Aorta (tissue), 5 donors: ENCODE measurements at regions of chr17 and their contacts with region 1.

Region 1: DNA sequence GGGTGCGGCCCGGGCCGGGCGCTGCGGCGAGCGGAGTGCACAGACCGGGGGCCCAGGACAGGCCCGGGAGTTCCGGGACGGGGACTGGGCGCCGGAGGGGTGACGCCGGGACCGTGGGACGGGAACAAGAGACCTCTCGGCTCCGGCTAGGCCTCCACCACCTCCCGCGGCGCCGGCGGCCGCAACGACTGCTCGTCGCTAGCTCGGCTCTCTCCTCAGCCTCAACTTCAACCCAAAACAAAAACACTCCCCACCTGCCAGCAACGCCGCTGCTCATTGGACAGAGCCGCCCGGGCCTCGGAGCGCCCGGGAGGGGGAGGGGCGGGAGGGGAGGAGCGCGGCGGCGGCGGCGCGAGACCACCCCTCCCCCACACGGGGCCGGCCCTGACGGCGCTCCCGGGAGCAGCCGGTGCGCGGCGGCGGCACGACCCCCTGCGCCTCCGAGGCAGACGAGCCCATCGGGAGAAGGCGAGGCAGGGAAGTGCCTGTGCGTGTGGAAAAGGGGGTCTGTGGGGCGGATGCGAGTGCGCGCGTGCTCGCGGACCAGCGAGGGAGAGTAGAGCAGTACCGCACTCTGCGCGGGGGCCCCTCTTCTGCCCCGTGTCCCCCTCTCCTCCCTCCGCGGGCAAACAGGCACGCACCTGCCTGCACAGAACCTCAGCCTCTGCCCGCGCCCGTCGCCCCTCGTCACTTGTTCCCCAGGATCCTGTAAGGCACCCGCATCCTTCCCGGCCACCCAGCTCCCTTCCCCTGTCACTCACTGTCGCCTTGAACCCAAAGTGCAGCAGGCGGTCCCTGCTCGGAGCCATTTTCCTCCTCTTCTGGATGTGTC is at the start of gene FBXL20:
- DNase-seq: peak; percentile 96 to 98
- ATAC-seq: peak; percentile 96
- H3K4me3 ChIP-seq: peak within 1 kb of the TSS; percentile 96 to 98
- H3K27ac ChIP-seq: peak within 1 kb of the TSS; percentile 43 to 66
- H3K4me1 ChIP-seq: no peaks in the 10 kb centered on the region
- H3K27me3 ChIP-seq: no peaks in the 10 kb centered on the region
- total RNA-seq, gene FBXL20: 22.0 to 29.8 TPM

Region 2: GRCh38 chr17:38539386-38539785 is 862.2 kb before region 1 on chr17:
- intact Hi-C with region 1: no loop called
- DNase-seq: no peak
- ATAC-seq: no peak
- H3K4me3 ChIP-seq: no peak overlapping the region
- H3K27ac ChIP-seq: no peak overlapping the region
- H3K4me1 ChIP-seq: no peaks in the 10 kb centered on the region
- H3K27me3 ChIP-seq: no peaks in the 10 kb centered on the region

Region 3: DNA sequence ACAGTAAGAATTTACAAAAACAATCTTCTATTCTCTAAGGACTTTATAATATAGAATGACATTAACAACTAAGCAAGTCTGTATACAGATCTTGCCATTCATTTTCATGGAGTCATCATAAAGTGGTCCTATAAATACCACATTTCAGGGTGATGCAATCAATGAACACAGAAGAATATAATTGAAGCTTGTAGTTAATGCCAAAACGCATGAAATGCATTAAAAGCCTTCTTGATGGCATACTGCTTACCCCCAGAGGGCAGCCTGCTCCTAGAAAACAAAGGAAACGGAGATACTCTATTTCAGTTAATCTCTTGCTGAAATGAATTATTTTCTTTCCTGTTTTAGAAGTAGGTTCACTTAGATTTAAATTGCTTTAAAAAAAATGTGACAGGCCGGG is 130.7 kb before region 1 on chr17:
- intact Hi-C with region 1: loop called in 1 of 2 experiments (anchors 5 kb)
- DNase-seq: no peak
- ATAC-seq: no peak
- H3K4me3 ChIP-seq: no peak overlapping the region
- H3K27ac ChIP-seq: no peak overlapping the region
- H3K4me1 ChIP-seq: no peaks in the 10 kb centered on the region
- H3K27me3 ChIP-seq: no peaks in the 10 kb centered on the region